H1 (cell line): ENCODE measurements at regions of chr15 and their contacts with region 1.

Region 1: DNA sequence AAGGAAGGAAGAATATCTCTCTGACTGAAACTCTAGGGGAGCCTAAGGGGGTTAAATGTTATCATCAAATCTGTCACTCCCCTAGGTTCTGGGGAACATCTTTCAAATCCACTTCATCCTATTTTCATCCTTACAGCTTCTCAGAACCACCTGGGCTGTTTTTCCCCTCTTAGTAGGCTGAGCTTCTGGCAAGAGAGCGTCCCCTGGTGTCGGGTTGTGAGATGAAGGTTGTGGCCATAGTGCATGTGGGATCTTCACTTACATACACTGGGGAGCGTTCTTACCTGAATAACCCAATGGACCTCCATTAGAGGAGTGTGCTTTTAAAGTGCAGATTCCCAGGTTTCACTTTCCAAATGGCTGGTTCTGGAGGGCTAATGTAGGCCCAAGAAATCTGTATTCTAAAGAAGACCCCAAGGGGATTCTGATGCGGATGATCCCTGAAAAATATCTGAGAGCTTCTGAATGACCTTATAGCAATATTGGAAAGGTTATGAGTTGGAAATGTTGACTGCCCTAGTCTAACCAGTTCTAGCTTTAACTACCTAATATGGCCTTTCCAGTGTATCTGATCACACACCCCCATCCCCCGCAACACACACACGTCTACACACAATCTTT is 663.7 kb downstream of the AGBL1 start:
- DNase-seq: peak; percentile 53 to 82
- H3K4me3 ChIP-seq: no peak overlapping the region
- H3K27ac ChIP-seq: no peak overlapping the region
- H3K4me1 ChIP-seq: no peaks in the 10 kb centered on the region
- H3K27me3 ChIP-seq: no peaks in the 10 kb centered on the region
- CTCF ChIP-seq: peak; percentile 85 to 92 (median 90)
- EP300 ChIP-seq: no peak
- POLR2A ChIP-seq: no peak
- RAD21 ChIP-seq: peak; percentile 93 to 98

Region 2: DNA sequence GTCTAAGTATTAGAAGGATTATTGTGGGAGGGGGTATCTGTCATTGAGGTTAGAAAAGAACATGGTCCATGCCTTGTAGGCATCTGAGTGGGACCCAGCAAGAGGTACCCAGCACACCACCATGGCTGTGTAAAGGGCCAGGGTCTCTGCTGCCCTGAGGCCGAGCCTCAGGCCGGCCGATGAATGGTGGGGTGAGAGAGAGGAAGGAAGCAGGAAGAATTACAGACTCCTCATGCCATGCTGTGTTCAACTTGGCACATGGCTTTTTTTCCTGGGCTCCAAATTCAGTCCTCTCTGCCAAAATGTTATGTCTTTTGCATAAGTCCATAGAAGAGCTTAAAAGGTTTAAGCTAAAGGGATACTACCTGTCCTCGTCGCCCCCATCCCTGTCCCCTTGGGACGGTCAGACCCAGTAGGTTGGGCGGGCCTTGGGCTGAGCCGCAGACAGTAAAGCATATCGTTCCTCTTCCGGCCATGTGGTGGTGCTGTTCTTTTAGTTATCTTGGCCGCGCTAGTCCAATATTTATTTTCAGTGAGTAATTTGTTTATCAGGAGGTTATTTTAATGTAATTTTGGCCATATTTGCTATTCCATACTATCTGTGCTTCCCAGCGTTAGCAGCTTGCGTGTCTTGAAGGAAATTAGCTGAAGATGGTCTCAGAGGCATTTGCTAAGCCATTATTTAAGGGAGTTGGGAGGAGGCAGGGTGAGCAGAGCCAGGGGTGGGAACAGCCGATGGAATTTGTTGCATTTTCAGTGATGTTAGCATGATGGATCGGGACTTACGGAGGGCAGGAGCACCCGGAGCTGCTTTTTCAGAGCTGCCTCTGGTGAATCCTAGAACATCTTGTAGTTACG is 511.3 kb before region 1 on chr15:
- CTCF ChIA-PET with region 1: interaction called, 38 read pairs
- POLR2A ChIA-PET with region 1: no interaction called
- DNase-seq: peak in 1 of 2 experiments; percentile 66
- H3K4me3 ChIP-seq: peak overlapping the region in 1 of 4 experiments; percentile 45; a peak in 3 of 8 replicates
- H3K27ac ChIP-seq: no peak overlapping the region
- H3K4me1 ChIP-seq: peaks cover 8 to 14% (median 11%) of the 10 kb centered on the region in 4 experiments
- H3K27me3 ChIP-seq: no peaks in the 10 kb centered on the region; a peak in 1 of 7 replicates
- CTCF ChIP-seq: peak; percentile 58 to 74 (median 69)
- EP300 ChIP-seq: peak in 1 of 2 experiments; percentile 22; a peak in 1 of 3 replicates
- POLR2A ChIP-seq: no peak
- RAD21 ChIP-seq: peak; percentile 85 to 89

Region 3: GRCh38 chr15:86377914-86378313 is 365.5 kb before region 1 on chr15:
- CTCF ChIA-PET with region 1: no interaction called
- POLR2A ChIA-PET with region 1: no interaction called
- DNase-seq: no peak
- H3K4me3 ChIP-seq: no peak overlapping the region
- H3K27ac ChIP-seq: no peak overlapping the region
- H3K4me1 ChIP-seq: no peaks in the 10 kb centered on the region
- H3K27me3 ChIP-seq: no peaks in the 10 kb centered on the region
- CTCF ChIP-seq: no peak
- EP300 ChIP-seq: no peak
- POLR2A ChIP-seq: no peak
- RAD21 ChIP-seq: no peak

Region 4: GRCh38 chr15:86624261-86625036 is 118.9 kb before region 1 on chr15:
- CTCF ChIA-PET with region 1: interaction called, 55 read pairs
- POLR2A ChIA-PET with region 1: no interaction called
- DNase-seq: peak; percentile 58 to 70
- H3K4me3 ChIP-seq: no peak overlapping the region
- H3K27ac ChIP-seq: no peak overlapping the region
- H3K4me1 ChIP-seq: peaks cover 0 to 2% (median 0%) of the 10 kb centered on the region in 4 experiments; a peak in 3 of 7 replicates
- H3K27me3 ChIP-seq: no peaks in the 10 kb centered on the region
- CTCF ChIP-seq: peak; percentile 79 to 88 (median 80)
- EP300 ChIP-seq: no peak
- POLR2A ChIP-seq: no peak
- RAD21 ChIP-seq: peak; percentile 97 to 98

Region 5: DNA sequence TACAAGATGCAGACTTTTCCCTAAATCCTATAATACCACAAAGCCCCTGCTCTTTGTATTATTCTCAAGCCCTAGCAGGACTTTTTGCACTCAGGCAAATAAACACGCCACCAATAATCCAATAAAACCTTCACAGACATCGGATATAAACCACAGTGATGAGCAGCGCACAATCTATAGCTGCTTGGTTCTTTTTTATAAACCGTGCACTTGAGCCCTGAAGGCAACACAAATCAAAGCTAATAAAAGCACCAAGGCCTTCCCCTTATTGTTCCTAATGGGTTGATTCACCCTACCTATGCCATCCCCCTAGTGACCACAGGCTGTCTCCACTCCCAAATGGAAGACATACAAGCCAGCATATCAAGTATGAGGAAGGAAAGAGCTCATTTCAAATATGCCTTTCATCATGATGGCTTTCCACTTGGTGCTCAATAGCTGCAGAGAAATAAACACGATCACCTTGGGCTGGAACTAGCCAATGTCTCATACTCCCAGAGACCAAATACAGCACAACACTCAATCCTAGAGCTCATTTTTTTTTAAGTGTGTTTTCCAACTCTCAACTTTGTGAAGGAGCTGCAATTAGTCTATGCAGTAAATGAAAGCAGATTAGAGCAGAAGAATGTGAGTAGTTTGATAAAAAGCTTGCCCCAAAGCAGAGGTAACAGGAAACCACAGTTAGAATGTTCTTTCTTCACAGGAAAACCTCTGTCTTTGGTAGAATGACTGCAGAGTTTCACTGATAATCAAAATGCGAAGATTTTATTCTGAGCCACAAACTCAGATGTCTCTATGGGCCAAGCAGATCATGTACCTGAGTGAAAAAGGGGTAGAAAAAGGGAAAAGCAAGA is 89.8 kb before region 1 on chr15:
- CTCF ChIA-PET with region 1: interaction called, 14 read pairs
- POLR2A ChIA-PET with region 1: no interaction called
- DNase-seq: no peak
- H3K4me3 ChIP-seq: no peak overlapping the region
- H3K27ac ChIP-seq: no peak overlapping the region
- H3K4me1 ChIP-seq: peaks cover 0 to 4% (median 0%) of the 10 kb centered on the region in 4 experiments; a peak in 2 of 7 replicates
- H3K27me3 ChIP-seq: no peaks in the 10 kb centered on the region
- CTCF ChIP-seq: peak in 1 of 3 experiments; percentile 11; a peak in 1 of 4 replicates
- EP300 ChIP-seq: no peak
- POLR2A ChIP-seq: no peak
- RAD21 ChIP-seq: no peak

Region 6: GRCh38 chr15:86663979-86664378 is 79.4 kb before region 1 on chr15:
- CTCF ChIA-PET with region 1: no interaction called
- POLR2A ChIA-PET with region 1: no interaction called
- DNase-seq: no peak
- H3K4me3 ChIP-seq: no peak overlapping the region
- H3K27ac ChIP-seq: no peak overlapping the region
- H3K4me1 ChIP-seq: peaks cover 0 to 6% (median 1%) of the 10 kb centered on the region in 4 experiments; a peak in 3 of 7 replicates
- H3K27me3 ChIP-seq: peaks cover 0 to 1% (median 0%) of the 10 kb centered on the region in 4 experiments; a peak in 1 of 7 replicates
- CTCF ChIP-seq: no peak
- EP300 ChIP-seq: no peak
- POLR2A ChIP-seq: no peak
- RAD21 ChIP-seq: no peak

Region 7: DNA sequence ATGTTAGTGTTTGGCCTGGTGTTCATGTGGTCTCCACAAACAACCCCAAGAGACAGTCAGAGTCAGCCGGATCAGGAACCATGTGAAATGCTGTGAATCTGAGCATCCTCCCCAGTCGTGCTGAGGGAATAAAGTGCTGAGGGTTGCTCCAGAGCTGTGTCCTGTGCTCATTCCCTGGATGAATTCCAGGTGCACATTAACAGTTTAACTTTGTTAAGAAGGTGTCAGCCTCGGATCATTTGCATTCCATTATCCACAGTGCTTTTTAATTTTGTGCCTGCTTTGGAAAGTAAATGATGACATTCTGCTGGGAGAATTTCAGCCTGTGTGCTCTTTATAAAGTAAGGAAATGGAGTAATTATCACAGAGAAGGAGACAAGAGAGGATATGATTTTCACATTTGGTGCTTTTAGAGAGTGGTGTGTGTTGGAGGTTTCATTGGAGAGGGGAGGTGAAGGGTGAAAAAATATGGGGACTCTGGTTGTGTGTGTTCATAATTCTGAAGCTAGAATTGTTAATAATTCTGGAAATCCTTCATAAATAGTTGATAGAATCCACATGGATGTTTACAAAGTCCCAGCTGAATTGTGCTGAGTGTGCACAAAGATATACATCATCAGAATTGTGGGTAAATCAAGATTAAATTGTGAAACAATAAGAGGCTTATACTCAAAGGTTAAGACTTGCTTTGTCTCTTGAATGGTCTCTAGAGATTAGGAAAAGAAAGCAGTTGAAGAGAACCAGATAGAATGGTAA is 42.4 kb before region 1 on chr15:
- CTCF ChIA-PET with region 1: no interaction called
- POLR2A ChIA-PET with region 1: no interaction called
- DNase-seq: no peak
- H3K4me3 ChIP-seq: no peak overlapping the region
- H3K27ac ChIP-seq: no peak overlapping the region
- H3K4me1 ChIP-seq: no peaks in the 10 kb centered on the region
- H3K27me3 ChIP-seq: no peaks in the 10 kb centered on the region
- CTCF ChIP-seq: no peak
- EP300 ChIP-seq: no peak
- POLR2A ChIP-seq: no peak
- RAD21 ChIP-seq: no peak

Region 8: DNA sequence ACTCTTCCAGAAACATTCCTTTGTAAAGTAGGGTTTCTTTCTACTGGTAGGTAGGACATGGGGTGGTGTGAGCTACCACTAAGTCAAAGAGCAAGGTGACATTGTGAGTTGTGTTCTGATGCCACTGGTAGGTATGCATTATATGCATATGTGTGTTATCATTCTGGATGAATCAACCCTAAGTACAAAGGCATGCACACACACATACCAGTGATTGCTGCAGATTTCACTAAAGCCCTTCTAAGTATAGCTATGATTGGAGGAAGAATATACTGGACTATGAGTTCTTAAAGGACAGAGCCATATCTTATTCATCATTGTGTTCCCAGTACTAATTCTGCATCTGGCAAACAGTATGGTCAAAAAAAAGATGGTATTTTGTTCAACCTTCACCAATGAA is 17.8 kb before region 1 on chr15:
- CTCF ChIA-PET with region 1: interaction called, 11 read pairs
- POLR2A ChIA-PET with region 1: no interaction called
- DNase-seq: no peak
- H3K4me3 ChIP-seq: no peak overlapping the region
- H3K27ac ChIP-seq: no peak overlapping the region
- H3K4me1 ChIP-seq: no peaks in the 10 kb centered on the region
- H3K27me3 ChIP-seq: no peaks in the 10 kb centered on the region
- CTCF ChIP-seq: no peak
- EP300 ChIP-seq: no peak
- POLR2A ChIP-seq: no peak
- RAD21 ChIP-seq: no peak

Region 9: DNA sequence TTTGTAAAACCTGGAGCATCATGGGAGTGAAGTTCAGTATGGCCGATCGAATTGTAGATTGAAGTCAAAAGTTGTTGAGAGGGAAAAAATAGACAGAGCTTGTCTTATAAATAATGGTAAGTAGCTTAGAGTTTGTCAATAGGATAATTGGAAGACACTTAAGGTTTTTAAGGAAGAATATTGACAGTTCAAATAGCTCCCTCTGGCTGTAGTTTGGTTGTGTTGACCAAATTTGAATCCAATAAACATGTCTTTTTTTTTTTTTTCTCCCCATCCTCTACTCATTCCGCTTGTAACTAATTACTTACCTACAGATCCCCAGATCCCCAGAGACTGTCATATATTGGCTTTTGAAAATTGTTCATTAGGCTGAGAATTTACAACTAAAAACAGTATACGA is 13.3 kb after region 1 on chr15:
- CTCF ChIA-PET with region 1: interaction called, 16 read pairs
- POLR2A ChIA-PET with region 1: no interaction called
- DNase-seq: no peak
- H3K4me3 ChIP-seq: no peak overlapping the region
- H3K27ac ChIP-seq: no peak overlapping the region
- H3K4me1 ChIP-seq: no peaks in the 10 kb centered on the region
- H3K27me3 ChIP-seq: no peaks in the 10 kb centered on the region
- CTCF ChIP-seq: peak in 1 of 3 experiments; percentile 21; a peak in 1 of 4 replicates
- EP300 ChIP-seq: no peak
- POLR2A ChIP-seq: no peak
- RAD21 ChIP-seq: peak; percentile 29 to 37; a peak in 3 of 4 replicates

Region 10: GRCh38 chr15:87219650-87220615 is 476.5 kb after region 1 on chr15:
- CTCF ChIA-PET with region 1: no interaction called
- POLR2A ChIA-PET with region 1: no interaction called
- DNase-seq: no peak
- H3K4me3 ChIP-seq: no peak overlapping the region
- H3K27ac ChIP-seq: no peak overlapping the region
- H3K4me1 ChIP-seq: peaks cover 0 to 3% (median 0%) of the 10 kb centered on the region in 4 experiments; a peak in 1 of 7 replicates
- H3K27me3 ChIP-seq: peaks cover 0 to 3% (median 0%) of the 10 kb centered on the region in 4 experiments; a peak in 2 of 7 replicates
- CTCF ChIP-seq: no peak
- EP300 ChIP-seq: no peak
- POLR2A ChIP-seq: no peak
- RAD21 ChIP-seq: no peak